ENCODE measurements at regions of chr19 and their contacts with region 1.

Region 1: DNA sequence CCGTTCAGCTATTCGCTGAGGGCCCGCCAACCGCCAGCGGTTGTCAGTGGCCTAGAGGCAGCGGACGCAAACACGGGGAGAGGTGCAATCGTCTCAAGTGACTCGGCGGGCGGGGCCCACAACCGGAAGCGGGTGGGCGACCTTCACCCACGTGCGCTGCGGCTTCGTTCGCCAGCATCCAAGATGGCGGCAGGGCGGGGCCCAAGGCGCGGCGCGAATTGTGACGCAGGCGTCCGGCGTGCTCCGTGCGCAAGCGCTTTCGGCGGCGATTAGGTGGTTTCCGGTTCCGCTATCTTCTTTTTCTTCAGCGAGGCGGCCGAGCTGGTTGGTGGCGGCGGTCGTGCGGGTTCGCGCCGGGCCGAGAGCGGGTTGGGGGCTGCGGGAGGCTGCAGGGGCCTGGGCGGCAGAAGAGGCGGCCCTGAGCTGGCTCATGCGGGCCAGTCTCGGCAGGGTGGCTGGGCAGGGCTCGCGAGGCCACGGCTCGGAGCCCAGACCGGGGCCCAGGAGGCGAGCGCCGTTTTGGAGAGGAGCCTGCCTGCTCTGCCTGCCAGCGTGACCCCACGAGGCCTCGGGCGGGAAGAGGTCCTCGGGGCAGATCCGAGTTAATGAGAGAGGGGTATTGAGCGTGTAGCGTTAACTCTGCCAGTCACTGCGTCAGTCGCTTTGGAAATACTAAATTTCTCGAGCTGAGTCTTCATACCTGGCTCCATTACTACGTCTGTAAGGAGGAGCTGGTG is at the start of gene UBA52:
- DNase-seq: peak; percentile 100
- ATAC-seq: peak; percentile 94
- H3K4me3 Mint-ChIP-seq: peak within 1 kb of the TSS; percentile 89
- H3K27ac Mint-ChIP-seq: peak within 1 kb of the TSS; percentile 95
- H3K4me1 Mint-ChIP-seq: peaks cover 27% of the 10 kb centered on the region
- H3K27me3 Mint-ChIP-seq: no peaks in the 10 kb centered on the region
- total RNA-seq, gene UBA52: 1,703 to 2,296 TPM

Region 2: GRCh38 chr19:18542936-18543815 is 28.6 kb before region 1 on chr19 and contains the start of gene FKBP8:
- CTCF ChIA-PET with region 1: interaction called, 6 read pairs
- POLR2A ChIA-PET with region 1: interaction called, 3 read pairs
- intact Hi-C with region 1: loop called (anchors 1 kb)
- DNase-seq: peak; percentile 98
- ATAC-seq: peak; percentile 92
- H3K4me3 Mint-ChIP-seq: peak within 1 kb of the TSS; percentile 92
- H3K27ac Mint-ChIP-seq: peak within 1 kb of the TSS; percentile 98
- H3K4me1 Mint-ChIP-seq: peaks cover 25% of the 10 kb centered on the region
- H3K27me3 Mint-ChIP-seq: no peaks in the 10 kb centered on the region
- total RNA-seq, gene FKBP8: 208 to 211 TPM

Region 3: DNA sequence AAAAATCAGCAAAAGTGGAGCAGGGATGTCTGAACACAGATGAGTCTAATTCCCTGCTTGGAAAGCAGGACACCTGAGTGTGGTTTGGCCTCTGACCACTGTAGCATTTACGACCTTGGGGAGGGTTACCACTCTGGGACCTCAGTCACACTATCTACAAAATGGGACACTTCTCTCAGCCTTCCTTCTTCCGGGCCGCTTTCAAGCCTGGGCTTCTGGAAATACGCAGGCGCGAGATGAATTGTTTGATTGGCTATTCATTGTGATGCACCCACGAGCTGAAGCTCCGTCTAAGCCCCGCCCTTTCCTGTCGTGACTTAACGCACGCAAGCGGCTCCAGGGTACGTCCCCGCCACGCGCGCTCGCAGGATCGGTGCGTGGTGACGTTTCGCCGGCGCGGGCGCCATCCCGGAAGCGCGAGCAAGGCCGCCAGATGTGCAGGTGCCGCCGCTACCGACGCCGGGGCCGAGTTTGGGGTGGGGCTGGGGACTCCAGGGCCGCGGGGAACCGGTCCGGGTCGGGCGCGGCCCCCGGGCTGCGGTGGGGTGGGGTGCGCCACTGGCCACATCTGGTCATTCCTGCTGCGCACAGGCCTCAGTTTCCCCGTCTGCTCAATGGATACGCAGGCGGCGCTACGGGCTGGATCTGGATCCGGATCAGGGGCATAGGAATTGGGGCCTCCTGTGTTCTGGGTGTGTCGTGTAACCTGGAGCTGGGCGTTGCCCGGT is 14.1 kb before region 1 on chr19 and contains the start of gene KXD1:
- CTCF ChIA-PET with region 1: interaction called, 17 read pairs
- POLR2A ChIA-PET with region 1: interaction called, 23 read pairs
- intact Hi-C with region 1: loop called (anchors 1 kb)
- DNase-seq: peak; percentile 99
- ATAC-seq: peak; percentile 99
- H3K4me3 Mint-ChIP-seq: peak within 1 kb of the TSS; percentile 91
- H3K27ac Mint-ChIP-seq: peak within 1 kb of the TSS; percentile 95
- H3K4me1 Mint-ChIP-seq: peaks cover 20% of the 10 kb centered on the region
- H3K27me3 Mint-ChIP-seq: no peaks in the 10 kb centered on the region
- total RNA-seq, gene KXD1: 121 to 170 TPM

Measured in activated CD4-positive, alpha-beta T cell treated with anti-CD3 and anti-CD28 coated beads for 36 hours (primary cell).